Posterior cingulate gyrus (tissue), 11 donors: ENCODE measurements at regions of chr17 and their contacts with region 1.

Region 1: DNA sequence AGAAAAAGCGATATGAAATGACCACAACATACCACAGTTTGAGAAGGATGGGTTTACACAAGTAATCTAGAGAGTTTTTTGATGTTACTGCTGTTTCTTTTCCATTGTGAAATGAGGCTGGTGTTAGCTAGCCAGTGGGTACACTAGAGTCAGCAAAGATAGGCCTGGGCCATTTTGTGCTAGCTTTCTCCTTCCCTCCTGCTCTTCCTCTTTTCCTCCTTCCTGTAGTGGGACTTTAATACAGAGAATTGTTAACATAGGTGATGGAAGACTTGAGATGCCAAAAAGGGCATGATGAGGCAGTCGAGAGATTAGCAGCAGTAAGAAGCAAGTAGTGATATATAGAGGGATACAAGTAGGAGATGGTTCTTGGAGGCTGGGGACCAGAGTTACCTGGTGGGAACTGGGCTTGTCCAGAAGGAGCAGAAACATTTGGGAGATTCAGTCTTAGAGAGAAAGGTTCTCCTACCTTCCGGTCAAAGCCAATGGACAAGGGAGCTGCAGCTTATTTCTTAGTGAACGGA is 7.7 kb downstream of the NSRP1 start:
- DNase-seq: no peak

Region 2: GRCh38 chr17:30236766-30237165 is 112.4 kb after region 1 on chr17:
- intact Hi-C with region 1: loop called (anchors 10 kb)
- DNase-seq: peak in 6 of 10 donors; percentile 31 to 91 (median 43)

Region 3: DNA sequence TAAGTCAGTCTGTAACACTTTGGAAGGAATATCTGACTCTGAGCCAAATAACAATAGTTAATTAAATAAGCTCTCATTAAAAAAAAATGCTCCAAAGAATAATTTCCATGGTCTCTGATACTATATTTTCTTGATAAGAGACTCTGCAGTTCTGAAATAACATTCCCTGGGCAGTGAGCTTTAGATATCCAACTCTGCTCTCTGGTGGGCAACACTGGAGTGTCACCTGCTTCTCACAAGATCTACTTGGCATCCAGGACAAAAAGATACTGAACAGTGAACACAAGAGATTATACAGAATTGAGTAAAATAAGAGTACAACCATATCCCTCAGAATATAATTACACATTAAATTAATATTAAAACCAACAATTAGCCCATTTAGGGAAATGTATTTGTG is 153.7 kb after region 1 on chr17:
- intact Hi-C with region 1: loop called (anchors 1 kb)
- DNase-seq: peak in 1 of 10 donors; percentile 4

Region 4: DNA sequence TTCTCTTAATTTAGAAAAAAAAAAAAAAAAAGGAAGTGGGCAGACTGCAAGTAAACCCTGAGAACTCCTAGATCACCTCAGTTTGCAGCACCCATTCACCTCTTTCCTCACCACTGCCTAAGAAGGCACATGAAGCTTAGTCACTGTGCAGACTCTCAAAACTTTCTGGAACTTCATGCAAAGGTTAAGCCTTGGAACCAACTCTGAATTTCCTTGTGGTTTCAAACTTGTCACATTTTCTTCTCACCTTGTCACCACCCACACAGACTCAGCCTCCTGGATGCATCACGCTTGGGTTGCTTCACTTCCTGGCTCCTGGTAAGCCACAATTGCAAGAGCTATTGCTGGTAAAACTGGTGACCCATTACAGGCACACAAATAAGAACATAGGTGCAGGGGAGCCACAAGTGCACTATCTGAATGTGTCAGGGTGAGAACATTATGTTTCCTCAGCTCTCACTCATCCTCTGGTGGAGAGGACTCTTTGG is 239.4 kb after region 1 on chr17:
- intact Hi-C with region 1: no loop called
- DNase-seq: peak in 3 of 10 donors; percentile 28 to 73 (median 43)